ENCODE measurements at regions of chr10 and their contacts with region 1.

Region 1: DNA sequence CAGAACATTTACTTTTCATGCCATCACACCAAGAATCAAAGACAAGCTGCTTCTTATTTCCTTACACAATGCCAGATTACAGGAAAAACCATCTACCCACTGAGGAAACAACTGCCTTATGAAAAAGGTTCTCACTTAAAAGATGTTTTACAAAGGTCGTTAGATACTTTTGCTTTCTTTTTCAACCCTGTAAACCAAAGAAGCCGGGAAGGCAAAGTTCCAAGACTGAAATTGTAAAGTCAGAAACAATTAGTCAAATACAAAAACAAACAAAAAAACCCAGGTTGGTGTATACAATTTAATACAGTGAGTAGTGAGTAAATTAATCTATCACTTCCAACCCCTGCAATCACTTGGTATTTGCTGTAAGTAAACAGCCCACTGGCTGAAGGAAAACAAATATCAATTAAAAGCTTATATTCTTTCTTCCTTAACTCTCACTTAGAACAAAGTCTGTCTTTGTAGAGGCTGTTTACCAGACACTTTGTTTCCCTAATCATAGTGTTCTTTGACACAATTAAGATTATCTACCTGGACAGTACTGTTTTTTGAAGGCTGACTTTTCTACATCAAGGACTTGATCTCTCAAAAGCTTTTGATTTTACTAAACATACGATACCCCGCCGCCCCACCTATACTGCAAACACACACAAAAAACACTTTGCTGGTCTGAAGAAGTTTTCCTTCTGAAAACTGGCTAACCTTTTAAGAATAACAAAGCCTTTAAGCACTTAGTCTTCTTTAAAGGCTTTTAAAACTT is 18.1 kb downstream of the ERLIN1 start:
- DNase-seq: no peak
- ATAC-seq: peak; percentile 34
- H3K4me3 Mint-ChIP-seq: peak overlapping the region; percentile 28
- H3K27ac Mint-ChIP-seq: peak overlapping the region; percentile 63
- H3K4me1 Mint-ChIP-seq: peaks cover 42% of the 10 kb centered on the region
- H3K27me3 Mint-ChIP-seq: no peaks in the 10 kb centered on the region
- CTCF ChIP-seq: no peak

Region 2: GRCh38 chr10:100148353-100149211 is 19.2 kb before region 1 on chr10:
- CTCF ChIA-PET with region 1: no interaction called
- POLR2A ChIA-PET with region 1: interaction called, 11 read pairs
- intact Hi-C with region 1: no loop called
- DNase-seq: peak; percentile 60
- ATAC-seq: peak; percentile 95
- H3K4me3 Mint-ChIP-seq: no peak overlapping the region
- H3K27ac Mint-ChIP-seq: peak overlapping the region; percentile 66
- H3K4me1 Mint-ChIP-seq: peaks cover 21% of the 10 kb centered on the region
- H3K27me3 Mint-ChIP-seq: peaks cover 2% of the 10 kb centered on the region
- CTCF ChIP-seq: no peak